Head of caudate nucleus (tissue), 42 donors: ENCODE measurements at regions of chr14 and their contacts with region 1.

Region 1: DNA sequence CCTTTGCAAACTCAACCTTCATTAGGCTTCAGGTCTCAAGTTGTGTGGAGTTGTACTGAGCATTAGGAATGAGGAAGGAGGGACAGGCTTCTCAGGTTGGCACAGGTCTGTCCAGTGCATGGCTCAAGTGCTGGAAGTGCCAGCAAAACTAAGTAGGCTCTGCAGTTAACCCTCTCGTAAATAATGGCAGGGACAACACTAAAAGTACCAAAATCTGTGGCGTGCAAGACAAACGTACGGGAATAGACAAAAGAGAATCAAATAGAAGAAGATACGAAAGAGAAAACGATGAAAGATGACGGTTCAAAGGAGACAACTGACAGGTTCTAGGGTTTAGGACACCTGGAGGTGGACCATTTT is 612 bp downstream of the TRAPPC6B start:
- DNase-seq: peak in 2 of 42 donors; percentile 7 to 9

Region 2: GRCh38 chr14:39114073-39114838 is 55.3 kb before region 1 on chr14 and contains the start of gene GEMIN2:
- intact Hi-C with region 1: loop called (anchors 5 kb)
- DNase-seq: peak; percentile 82 to 97 (median 94)